Motor neuron (in vitro differentiated cells): ENCODE measurements at regions of chr14 and their contacts with region 1.

Region 1: GRCh38 chr14:75088574-75089373 is 19.3 kb downstream of the ZC2HC1C start:
- ATAC-seq: peak; percentile 56 to 90 (median 81)
- H3K4me3 ChIP-seq: no peak overlapping the region
- H3K27ac ChIP-seq: no peak overlapping the region
- H3K4me1 ChIP-seq: no peaks in the 10 kb centered on the region

Region 2: DNA sequence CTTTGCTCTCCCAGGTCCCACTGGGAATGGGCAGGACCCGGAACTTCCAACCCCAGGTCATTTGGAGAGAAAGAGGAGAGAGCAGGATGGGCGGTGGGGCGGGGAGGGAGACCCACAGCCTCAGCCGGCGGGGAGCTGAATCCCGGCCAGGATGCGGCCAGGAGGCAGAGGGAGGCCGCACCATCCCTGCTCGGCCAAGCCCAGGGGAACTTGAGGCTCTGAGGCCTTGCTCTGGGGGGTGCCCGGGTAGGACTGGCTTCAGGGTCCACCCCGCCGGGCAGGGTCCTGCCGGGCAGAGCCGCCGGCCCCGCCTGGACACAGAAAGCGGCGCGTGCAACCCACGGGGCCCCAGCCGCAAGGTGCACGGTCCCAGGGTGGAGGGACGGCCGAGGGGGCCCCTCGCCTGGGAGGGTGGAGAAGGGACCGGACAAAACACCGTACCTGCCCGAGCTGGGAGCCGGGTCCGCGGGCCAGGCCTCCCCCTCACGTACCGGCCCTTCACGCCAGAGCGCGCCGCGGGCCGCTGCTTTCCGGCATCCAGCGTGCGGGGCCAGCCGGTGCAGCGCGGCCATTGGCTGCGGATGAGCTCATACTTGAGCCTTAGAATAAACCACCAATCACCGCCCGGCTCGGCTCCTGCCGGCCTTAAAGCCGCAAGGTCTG is 165.9 kb before region 1 on chr14 and contains the start of gene RPS6KL1:
- in situ Hi-C with region 1: loop called in 4 of 9 experiments (anchors 25 kb)
- ATAC-seq: peak; percentile 98 to 100 (median 98)
- H3K4me3 ChIP-seq: peak within 1 kb of the TSS; percentile 63 to 86 (median 74)
- H3K27ac ChIP-seq: peak within 1 kb of the TSS; percentile 47 to 51
- H3K4me1 ChIP-seq: no peaks in the 10 kb centered on the region
- total RNA-seq, gene RPS6KL1: 1.6 to 45.1 (median 29.0) TPM

Region 3: DNA sequence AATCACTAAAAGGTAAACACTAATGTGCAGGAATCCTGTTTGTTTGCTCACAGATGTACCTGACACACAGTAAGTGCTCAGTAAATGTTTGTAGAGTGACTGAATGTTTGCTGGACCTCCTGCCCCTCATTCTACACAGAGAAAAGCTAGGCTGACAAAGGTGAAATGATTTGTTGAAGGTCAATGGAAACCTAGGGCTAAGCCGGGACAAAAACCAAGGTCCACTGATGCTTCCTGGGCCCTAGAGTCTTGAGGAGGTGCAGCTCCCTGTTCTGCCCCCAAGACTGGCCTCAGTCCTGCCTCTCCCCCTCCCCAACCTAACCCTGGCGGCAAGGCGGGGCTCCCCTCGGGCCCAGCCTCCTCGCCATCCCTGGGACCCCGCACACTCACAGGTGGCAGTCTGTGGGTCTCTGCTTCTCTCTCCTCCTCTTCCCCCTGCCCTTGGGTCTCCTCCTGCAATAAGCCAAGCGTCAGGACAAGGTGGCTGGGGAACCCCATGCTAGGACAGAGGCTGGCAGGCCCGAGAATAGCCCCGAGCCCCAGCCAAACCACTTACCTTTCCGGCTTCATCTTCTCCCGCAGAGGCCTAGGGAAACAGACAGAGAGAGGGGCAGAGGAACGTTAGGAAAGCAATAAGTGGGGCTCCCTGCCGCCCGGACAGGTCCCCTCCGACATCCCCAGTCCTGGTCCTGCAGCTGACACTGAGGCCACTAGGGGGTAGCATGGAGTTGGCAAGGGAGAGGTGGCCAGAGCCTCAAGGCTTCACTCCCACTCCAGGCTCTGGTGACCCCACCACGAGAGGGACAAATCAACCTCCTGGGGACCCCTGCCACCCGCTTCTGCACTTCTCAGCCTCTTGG is 142.7 kb before region 1 on chr14:
- in situ Hi-C with region 1: loop called in 1 of 9 experiments (anchors 25 kb)
- ATAC-seq: peak; percentile 66 to 91 (median 74)
- H3K4me3 ChIP-seq: no peak overlapping the region
- H3K27ac ChIP-seq: peak overlapping the region in 1 of 2 donors; percentile 23
- H3K4me1 ChIP-seq: peaks cover 11 to 24% of the 10 kb centered on the region in 2 donors

Region 4: GRCh38 chr14:75147423-75148071 is 58.8 kb after region 1 on chr14:
- in situ Hi-C with region 1: no loop called
- ATAC-seq: peak; percentile 86 to 98 (median 95)
- H3K4me3 ChIP-seq: no peak overlapping the region
- H3K27ac ChIP-seq: peak overlapping the region in 1 of 2 donors; percentile 59
- H3K4me1 ChIP-seq: no peaks in the 10 kb centered on the region

Region 5: GRCh38 chr14:75205591-75205990 is 116.8 kb after region 1 on chr14:
- in situ Hi-C with region 1: no loop called
- ATAC-seq: no peak
- H3K4me3 ChIP-seq: no peak overlapping the region
- H3K27ac ChIP-seq: no peak overlapping the region
- H3K4me1 ChIP-seq: no peaks in the 10 kb centered on the region